Prostate gland (tissue), 2 donors: ENCODE measurements at regions of chr1 and their contacts with region 1.

Region 1: GRCh38 chr1:23772049-23772853 is 6.0 kb upstream of the PITHD1 start:
- DNase-seq: peak; percentile 87
- H3K4me3 ChIP-seq: no peak overlapping the region
- H3K27ac ChIP-seq: no peak overlapping the region
- H3K4me1 ChIP-seq: no peaks in the 10 kb centered on the region
- H3K27me3 ChIP-seq: no peaks in the 10 kb centered on the region
- CTCF ChIP-seq: peak; percentile 62 to 89 (median 83)
- POLR2A ChIP-seq: no peak

Region 2: DNA sequence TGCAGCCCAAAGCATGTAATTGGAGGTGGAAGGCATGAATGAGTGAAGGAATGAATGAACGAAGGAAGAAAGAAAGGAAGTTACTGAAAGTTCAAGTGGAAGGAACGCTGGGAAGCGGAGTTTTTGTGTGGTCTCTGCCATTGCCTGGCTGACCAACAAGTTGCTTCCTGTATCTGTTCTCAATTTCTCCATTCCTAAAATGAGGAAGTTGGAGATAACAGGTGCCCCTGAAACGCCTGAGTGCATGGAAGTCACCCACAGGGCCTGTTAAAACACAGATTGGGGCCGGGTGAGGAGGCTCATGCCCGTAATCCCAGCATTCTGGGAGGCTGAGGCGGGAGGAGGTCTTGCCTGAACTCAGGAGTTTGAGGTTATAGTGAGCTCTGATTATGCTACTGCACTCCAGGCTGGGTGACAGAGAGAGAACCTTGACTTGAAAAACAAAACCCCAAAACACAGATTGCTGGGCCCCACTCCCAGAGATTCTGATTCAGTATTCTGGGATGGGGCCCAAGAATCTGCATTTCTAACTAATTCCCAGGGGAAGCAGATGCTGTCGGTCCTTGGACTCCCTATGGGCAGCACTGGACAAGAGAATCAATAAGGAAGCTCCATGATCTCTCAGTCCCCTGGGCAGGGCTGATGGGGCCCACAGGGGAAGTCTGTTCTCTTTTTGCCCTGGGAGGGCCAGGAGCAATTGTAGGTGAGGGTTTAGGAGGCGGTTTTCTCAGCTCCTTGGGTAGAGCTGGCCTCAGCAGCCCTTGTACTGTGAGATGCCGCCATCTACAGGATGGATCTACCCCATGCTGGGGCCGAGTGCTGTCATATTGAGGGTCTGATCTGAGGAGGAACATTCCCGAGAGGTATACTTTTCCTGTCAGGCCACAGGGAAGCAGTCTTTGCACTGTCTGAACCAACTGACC is 144.2 kb after region 1 on chr1:
- intact Hi-C with region 1: loop called (anchors 5 kb)
- DNase-seq: peak; percentile 21
- H3K4me3 ChIP-seq: no peak overlapping the region
- H3K27ac ChIP-seq: no peak overlapping the region
- H3K4me1 ChIP-seq: no peaks in the 10 kb centered on the region
- H3K27me3 ChIP-seq: no peaks in the 10 kb centered on the region
- CTCF ChIP-seq: peak in 2 of 4 experiments; percentile 43 to 70
- POLR2A ChIP-seq: no peak